ENCODE measurements at regions of chr15 and their contacts with region 1.

Region 1: DNA sequence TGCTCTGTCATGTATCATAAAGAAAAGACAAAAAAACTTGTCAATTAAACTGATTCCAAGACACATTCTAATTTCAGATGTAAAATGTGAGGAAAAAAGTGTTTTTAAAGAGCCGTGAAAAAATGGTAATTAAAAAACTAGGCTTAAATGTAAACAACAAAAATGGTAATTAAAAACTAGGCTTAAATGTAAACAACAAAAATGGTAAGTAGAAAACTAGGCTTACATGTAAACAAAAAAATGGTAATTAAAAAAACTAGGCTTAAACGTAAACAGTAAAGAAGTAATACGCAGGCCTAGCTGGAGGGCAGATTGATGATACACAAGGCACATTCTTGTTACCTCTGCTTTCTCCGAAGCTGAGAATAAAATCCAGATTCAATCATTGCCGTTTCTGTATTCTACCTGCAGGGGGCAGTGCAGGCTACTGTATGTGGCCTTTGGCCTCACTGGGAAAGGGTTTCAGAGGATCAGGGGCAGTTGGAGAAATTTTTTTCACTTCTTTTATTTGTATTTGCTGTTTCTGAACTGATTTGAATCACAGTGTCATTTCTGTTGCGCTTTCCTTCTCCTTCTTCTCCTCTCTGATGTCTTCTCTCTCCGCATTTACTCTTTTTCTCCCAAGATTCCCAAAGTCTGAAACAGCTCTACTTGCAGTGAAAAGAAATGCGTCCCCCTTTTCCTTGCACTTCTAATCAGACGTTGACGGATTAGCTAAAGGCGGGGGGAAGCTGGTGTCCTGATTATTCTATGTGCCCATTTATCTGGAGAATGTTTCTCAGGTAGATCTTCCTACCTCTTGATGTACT is 67.2 kb upstream of the MCTP2 start:
- DNase-seq: peak; percentile 50
- H3K27ac ChIP-seq: no peak overlapping the region
- CTCF ChIP-seq: peak; percentile 86

Region 2: DNA sequence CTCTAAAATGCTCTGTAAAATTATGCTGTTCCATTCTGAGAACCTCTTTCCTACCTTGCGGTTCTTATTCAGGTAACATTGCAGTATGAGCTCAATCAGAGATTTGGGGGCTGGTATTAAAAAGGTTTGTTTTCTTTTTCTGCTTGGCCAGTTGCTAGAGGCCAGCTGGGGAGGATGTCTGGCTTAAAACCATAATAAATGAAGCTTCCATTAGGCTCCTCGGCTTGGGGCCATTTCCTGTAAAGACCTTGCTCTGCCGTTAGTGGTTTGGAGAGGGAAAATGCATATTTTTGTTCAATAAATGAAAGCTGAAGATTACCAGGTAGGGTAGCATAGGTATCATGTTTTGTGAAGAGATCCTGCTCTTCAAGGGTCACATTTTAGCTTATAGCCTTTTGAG is 122.4 kb after region 1 on chr15:
- CTCF ChIA-PET with region 1: no interaction called
- POLR2A ChIA-PET with region 1: no interaction called
- DNase-seq: no peak
- H3K27ac ChIP-seq: no peak overlapping the region
- CTCF ChIP-seq: no peak

Region 3: DNA sequence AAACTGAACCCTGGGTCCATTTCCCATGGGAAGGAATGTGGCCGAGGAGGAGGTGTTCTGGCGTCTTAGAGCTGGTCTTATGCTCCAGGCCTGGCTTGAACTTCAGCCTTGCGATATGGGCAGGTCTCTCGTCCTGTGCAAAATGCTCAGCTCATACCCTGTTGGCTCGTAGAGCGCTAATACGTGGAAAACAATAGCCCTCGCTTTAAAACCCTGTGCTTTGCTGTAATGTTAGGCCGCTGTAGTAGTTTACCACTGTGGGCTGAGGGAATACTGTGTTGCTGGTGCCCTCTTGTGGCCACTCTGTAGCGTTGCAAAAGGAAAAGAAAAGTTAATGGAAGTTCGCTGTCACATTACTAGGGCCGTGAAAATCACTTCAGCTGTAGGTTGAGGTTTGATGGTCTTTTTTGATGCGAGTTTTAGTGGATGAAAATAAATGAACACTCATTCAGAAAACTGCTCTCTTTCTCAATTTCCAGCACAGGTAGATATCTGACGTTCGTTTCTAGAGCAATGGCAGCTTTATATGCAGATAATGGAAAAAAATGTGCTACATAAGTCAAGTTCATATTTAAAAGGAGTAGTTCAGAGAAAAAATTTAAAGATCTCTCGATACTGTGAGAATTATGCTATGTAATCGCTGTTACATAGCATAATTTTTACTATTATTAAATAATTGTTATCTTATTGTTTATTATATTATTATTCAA is 160.1 kb after region 1 on chr15:
- CTCF ChIA-PET with region 1: interaction called, 115 read pairs
- POLR2A ChIA-PET with region 1: no interaction called
- DNase-seq: peak; percentile 70
- H3K27ac ChIP-seq: no peak overlapping the region
- CTCF ChIP-seq: peak; percentile 95